Gastrocnemius medialis (tissue), 4 donors: ENCODE measurements at regions of chr15 and their contacts with region 1.

Region 1: GRCh38 chr15:22838292-22839042 is at the start of gene NIPA2:
- DNase-seq: peak; percentile 94 to 98
- ATAC-seq: peak; percentile 95 to 97
- H3K4me3 ChIP-seq: peak within 1 kb of the TSS; percentile 70 to 77 (median 75)
- H3K27ac ChIP-seq: peak within 1 kb of the TSS; percentile 87 to 96 (median 91)
- H3K4me1 ChIP-seq: peaks cover 17 to 20% of the 10 kb centered on the region in 2 donors
- H3K27me3 ChIP-seq: no peaks in the 10 kb centered on the region
- CTCF ChIP-seq: peak in 1 of 5 experiments; percentile 22
- POLR2A ChIP-seq: peak; percentile 89 to 91
- total RNA-seq, gene NIPA2: 27.3 to 43.5 (median 38.6) TPM

Region 2: DNA sequence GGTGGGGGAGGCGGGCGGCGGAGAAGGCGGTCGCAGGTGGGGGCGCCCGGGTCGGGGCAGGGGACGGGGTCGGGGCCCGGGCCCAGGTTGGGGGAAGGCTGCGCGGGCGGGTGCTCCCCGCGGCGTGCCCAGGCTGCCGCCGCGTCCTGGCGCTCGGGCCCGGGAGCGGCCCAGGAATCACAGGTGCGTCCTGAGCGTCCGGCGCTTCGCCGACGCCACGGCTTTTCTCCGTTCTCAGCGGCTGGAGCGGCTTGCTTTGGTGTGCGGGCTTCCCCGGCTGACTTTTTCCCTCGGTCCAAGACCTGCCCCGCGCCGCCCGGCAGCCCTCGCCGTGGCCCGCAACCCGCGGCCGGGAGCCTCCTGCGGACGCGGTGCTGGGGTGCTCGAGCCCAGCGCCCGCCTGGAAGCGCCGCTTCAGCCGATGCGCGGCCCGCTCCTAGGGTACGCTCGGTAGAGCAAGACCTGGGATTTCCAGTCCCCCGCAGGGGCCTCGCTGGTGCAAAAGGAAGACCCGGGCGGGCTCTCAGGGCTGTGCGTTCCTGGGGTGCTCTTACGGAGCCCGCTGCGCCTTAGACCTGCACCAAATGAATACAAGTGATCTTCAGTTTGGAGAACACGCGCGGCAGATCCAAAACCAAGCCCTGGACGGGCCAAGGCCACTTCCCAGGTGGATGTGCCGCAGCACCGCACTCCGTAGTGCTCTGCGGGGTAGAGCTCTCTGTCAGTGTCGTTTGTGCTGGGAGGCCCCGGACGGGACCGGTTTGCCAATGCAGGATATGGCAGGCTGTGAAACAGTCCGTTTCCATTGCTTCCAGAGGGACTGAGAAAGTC is 51.4 kb before region 1 on chr15:
- in situ Hi-C with region 1: no loop called
- intact Hi-C with region 1: loop called (anchors 1 kb)
- DNase-seq: no peak
- ATAC-seq: peak; percentile 46 to 50
- H3K4me3 ChIP-seq: peak overlapping the region; percentile 54 to 95 (median 78)
- H3K27ac ChIP-seq: peak overlapping the region; percentile 79 to 93 (median 88)
- H3K4me1 ChIP-seq: peaks cover 0 to 7% of the 10 kb centered on the region in 2 donors
- H3K27me3 ChIP-seq: no peaks in the 10 kb centered on the region
- CTCF ChIP-seq: no peak
- POLR2A ChIP-seq: no peak

Region 3: GRCh38 chr15:23039151-23039916 is 200.9 kb after region 1 on chr15 and contains the start of gene TUBGCP5:
- in situ Hi-C with region 1: loop called in 1 of 4 experiments (anchors 10 kb)
- intact Hi-C with region 1: loop called (anchors 5 kb)
- DNase-seq: peak; percentile 90 to 94
- ATAC-seq: peak; percentile 96
- H3K4me3 ChIP-seq: peak within 1 kb of the TSS; percentile 57 to 85 (median 78)
- H3K27ac ChIP-seq: peak within 1 kb of the TSS; percentile 76 to 84 (median 78)
- H3K4me1 ChIP-seq: peaks cover 8 to 10% of the 10 kb centered on the region in 2 donors
- H3K27me3 ChIP-seq: no peaks in the 10 kb centered on the region
- CTCF ChIP-seq: peak; percentile 50 to 67 (median 59)
- POLR2A ChIP-seq: peak; percentile 83 to 87
- total RNA-seq, gene TUBGCP5: 11.6 to 18.2 (median 13.6) TPM

Region 4: DNA sequence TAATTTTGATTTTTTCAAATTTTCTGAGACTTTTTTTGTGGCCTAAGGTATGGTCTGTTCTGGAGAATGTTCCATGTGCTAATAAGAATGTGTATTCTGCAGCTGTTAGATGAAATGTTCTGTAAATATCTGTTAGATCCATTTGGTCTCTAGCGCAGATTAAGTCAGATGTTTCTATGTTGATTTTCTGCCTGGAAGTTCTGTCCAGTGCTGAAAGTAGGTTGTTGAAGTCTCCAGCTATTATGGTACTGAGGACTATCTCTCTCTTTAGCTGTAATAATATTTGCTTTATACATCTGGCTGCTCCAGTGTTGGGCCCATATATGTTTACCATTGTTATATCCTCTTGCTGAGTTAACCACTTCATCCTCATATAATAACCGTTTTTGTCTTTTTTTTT is 214.0 kb after region 1 on chr15:
- in situ Hi-C with region 1: no loop called
- intact Hi-C with region 1: no loop called
- DNase-seq: no peak
- ATAC-seq: no peak
- H3K4me3 ChIP-seq: no peak overlapping the region
- H3K27ac ChIP-seq: no peak overlapping the region
- H3K4me1 ChIP-seq: no peaks in the 10 kb centered on the region
- H3K27me3 ChIP-seq: no peaks in the 10 kb centered on the region
- CTCF ChIP-seq: no peak
- POLR2A ChIP-seq: no peak

Region 5: DNA sequence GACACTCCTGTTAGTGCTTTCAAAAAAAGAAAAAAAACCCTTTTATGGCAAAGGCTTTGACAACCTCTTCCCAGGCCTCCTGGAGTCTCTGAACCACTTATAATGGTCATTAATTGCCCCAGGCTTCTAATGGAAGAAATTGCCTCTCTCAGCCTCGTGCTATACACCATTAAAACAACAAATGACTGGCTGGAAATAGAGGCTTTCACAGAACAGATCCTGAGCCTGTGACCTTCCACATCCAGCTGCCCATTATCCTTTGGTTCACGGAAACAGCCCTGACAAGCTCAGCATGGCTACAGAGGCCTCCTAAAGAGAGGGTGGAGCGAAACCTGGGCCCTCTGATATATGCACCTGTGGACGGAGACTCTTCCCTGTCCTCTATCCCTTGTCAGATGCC is 700.2 kb after region 1 on chr15:
- in situ Hi-C with region 1: no loop called
- intact Hi-C with region 1: no loop called
- DNase-seq: no peak
- ATAC-seq: no peak
- H3K4me3 ChIP-seq: no peak overlapping the region
- H3K27ac ChIP-seq: no peak overlapping the region
- H3K4me1 ChIP-seq: no peaks in the 10 kb centered on the region
- H3K27me3 ChIP-seq: no peaks in the 10 kb centered on the region
- CTCF ChIP-seq: no peak
- POLR2A ChIP-seq: no peak